Calu3 (cell line): ENCODE measurements at regions of chr16 and their contacts with region 1.

Region 1: GRCh38 chr16:11990702-11991390 is 14.3 kb downstream of the SNX29 start:
- DNase-seq: no peak
- H3K4me3 Mint-ChIP-seq: no peak overlapping the region
- H3K27ac Mint-ChIP-seq: no peak overlapping the region
- H3K4me1 Mint-ChIP-seq: peaks cover 11% of the 10 kb centered on the region
- H3K27me3 Mint-ChIP-seq: no peaks in the 10 kb centered on the region
- CTCF ChIP-seq: no peak

Region 2: GRCh38 chr16:11597239-11598101 is 393.4 kb before region 1 on chr16:
- CTCF ChIA-PET with region 1: no interaction called
- intact Hi-C with region 1: no loop called
- DNase-seq: peak; percentile 72
- H3K4me3 Mint-ChIP-seq: peak overlapping the region; percentile 2
- H3K27ac Mint-ChIP-seq: peak overlapping the region; percentile 46
- H3K4me1 Mint-ChIP-seq: peaks cover 27% of the 10 kb centered on the region
- H3K27me3 Mint-ChIP-seq: no peaks in the 10 kb centered on the region
- CTCF ChIP-seq: no peak

Region 3: GRCh38 chr16:12057266-12057665 is 66.4 kb after region 1 on chr16:
- CTCF ChIA-PET with region 1: interaction called, 10 read pairs
- intact Hi-C with region 1: no loop called
- DNase-seq: no peak
- H3K4me3 Mint-ChIP-seq: no peak overlapping the region
- H3K27ac Mint-ChIP-seq: no peak overlapping the region
- H3K4me1 Mint-ChIP-seq: peaks cover 19% of the 10 kb centered on the region
- H3K27me3 Mint-ChIP-seq: no peaks in the 10 kb centered on the region
- CTCF ChIP-seq: no peak

Region 4: GRCh38 chr16:12095275-12096156 is 104.7 kb after region 1 on chr16:
- CTCF ChIA-PET with region 1: no interaction called
- intact Hi-C with region 1: no loop called
- DNase-seq: peak; percentile 76
- H3K4me3 Mint-ChIP-seq: no peak overlapping the region
- H3K27ac Mint-ChIP-seq: no peak overlapping the region
- H3K4me1 Mint-ChIP-seq: peaks cover 13% of the 10 kb centered on the region
- H3K27me3 Mint-ChIP-seq: no peaks in the 10 kb centered on the region
- CTCF ChIP-seq: peak; percentile 94